ENCODE measurements at regions of chr17 and their contacts with region 1.

Region 1: DNA sequence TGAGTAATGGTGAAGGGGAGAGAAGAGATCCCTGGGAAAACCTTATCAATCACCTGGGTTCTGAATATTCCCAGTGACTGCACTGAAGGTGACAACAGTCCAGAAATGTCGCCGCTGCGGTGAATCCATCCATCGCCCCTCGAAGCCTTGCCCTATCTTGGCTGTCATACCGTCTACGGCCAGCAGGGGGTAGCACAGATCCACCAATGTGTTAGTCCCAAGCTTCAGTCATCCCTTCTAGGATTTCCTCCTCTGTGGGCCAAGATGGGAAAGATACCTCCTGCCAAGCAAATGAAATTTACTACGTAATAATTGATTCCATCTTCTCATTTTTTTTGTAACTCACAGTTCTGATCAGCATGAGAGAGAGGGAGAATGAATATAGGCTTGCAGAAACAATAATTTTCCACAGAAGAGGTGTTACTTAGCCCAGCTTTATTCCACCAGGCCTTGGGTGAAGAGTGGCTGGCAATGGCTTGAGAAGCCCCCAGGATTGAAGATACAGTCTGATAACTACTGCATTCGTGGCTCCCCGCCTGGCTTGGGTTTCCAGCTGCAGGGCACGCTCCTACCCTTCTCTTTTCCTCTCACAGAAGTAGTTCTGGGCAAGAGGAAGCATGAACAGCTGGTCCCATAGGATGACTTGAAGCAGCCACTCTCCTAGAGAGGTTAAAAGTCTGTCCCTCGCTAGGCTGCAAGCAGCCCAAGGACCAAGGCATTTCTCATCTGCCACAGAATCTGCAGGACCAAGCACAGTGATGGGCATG is 2.6 kb upstream of the FMNL1 start:
- DNase-seq: peak; percentile 86
- H3K4me3 ChIP-seq: peak overlapping the region in 1 of 2 experiments; percentile 28; a peak in 1 of 4 replicates
- H3K27ac ChIP-seq: no peak overlapping the region
- H3K4me1 ChIP-seq: peaks cover 0 to 24% of the 10 kb centered on the region in 2 experiments; a peak in 1 of 4 replicates
- H3K27me3 ChIP-seq: no peaks in the 10 kb centered on the region
- CTCF ChIP-seq: peak; percentile 93
- EP300 ChIP-seq: no peak; a peak in 1 of 4 replicates
- RAD21 ChIP-seq: peak; percentile 100

Region 2: DNA sequence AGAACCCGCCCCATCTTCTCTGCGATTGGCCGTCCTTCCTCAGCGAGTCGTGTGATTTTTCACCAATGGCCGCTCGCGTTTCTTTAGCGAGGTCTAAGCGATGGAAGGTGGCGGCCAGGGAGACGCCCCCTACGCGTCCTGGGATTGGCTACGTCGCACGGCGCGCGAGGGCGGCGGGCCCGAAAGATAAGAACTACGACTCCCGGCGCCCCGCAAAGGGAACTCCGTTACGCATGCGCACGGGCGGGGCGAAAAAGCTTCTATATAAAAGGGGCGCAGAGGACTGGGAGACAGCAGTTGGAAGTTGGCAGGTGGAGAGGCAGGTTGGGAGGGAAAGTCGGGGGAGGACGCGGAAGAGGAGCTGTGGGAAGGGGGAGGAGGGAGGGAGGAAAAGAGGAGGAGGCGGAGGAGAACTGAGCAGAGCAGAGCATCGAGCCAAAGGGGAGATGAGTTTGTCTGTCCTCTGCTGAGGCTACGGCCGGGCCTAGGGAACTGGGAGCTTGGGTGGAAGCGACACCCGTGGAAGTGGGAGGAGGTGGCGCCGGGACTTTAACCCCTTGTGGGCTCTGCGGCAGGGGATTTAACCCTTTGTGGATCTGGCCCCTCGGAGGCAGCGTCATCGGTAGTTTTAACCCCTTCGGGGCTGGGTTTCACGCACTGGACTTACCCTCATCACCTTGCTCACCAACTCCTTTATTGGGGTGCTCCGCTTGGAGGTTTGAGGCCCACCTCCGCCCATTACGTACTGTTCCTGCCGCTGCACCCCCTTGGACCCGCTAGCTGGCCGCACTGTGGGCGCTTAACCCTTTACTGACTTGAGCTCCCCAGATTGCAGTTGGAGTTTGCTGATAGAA is 70.7 kb before region 1 on chr17 and contains the start of gene HEXIM1:
- CTCF ChIA-PET with region 1: interaction called, 11 read pairs
- POLR2A ChIA-PET with region 1: interaction called, 9 read pairs
- DNase-seq: peak; percentile 94
- H3K4me3 ChIP-seq: peak within 1 kb of the TSS; percentile 85 to 99
- H3K27ac ChIP-seq: peak within 1 kb of the TSS; percentile 99 to 100
- H3K4me1 ChIP-seq: peaks cover 17 to 25% of the 10 kb centered on the region in 2 experiments; a peak in 3 of 4 replicates
- H3K27me3 ChIP-seq: no peaks in the 10 kb centered on the region
- CTCF ChIP-seq: no peak
- EP300 ChIP-seq: no peak; a peak in 1 of 4 replicates
- RAD21 ChIP-seq: no peak
- polyA plus RNA-seq, gene HEXIM1: 16.1 and 20.7 TPM in 2 replicates

Region 3: DNA sequence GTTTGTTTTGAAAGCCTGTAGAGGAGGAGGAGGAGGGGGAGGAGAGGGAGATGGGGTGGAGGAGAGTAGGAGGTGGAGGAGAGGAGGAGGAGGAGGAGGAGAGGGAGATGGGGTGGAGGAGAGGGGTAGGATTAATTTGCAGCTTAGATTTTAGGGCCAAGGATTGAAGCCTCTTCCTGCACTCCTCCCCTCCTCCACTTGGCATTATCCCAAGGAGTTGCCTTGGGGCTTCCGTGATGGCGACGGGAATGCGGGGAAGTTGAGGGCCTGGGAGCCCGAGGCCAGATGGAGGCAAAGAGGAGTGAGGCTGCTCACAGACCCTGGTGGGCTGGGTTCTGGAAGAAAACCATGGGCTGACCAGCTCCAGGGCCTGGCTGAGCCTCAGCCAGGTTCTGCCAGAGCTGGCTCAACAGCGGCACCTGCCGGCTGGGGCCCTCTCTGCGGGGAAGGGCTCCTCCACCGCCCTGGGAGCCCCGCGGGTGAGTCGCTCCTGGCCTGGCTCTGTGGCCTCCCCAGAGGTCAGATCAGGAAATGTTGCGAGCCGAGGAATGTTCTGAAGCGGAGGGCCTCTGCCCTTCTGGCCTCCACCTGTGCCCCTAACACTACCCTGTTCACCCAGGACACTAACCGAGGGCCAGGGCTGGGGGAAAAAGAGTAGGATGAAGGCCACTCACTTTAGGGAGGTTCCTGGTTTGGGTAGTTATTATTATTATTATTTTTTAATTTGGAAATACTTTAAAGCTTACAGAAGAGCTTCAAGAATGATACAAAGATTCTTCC is 21.3 kb before region 1 on chr17:
- CTCF ChIA-PET with region 1: interaction called, 12 read pairs
- POLR2A ChIA-PET with region 1: no interaction called
- DNase-seq: peak; percentile 93
- H3K4me3 ChIP-seq: peak overlapping the region in 1 of 2 experiments; percentile 54; a peak in 1 of 4 replicates
- H3K27ac ChIP-seq: peak overlapping the region; percentile 41 to 46; a peak in 3 of 4 replicates
- H3K4me1 ChIP-seq: peaks cover 5 to 8% of the 10 kb centered on the region in 2 experiments; a peak in 3 of 4 replicates
- H3K27me3 ChIP-seq: no peaks in the 10 kb centered on the region
- CTCF ChIP-seq: peak; percentile 98
- EP300 ChIP-seq: no peak
- RAD21 ChIP-seq: peak; percentile 95

Region 4: GRCh38 chr17:45247429-45248131 is 28.5 kb after region 1 on chr17:
- CTCF ChIA-PET with region 1: interaction called, 232 read pairs
- POLR2A ChIA-PET with region 1: no interaction called
- DNase-seq: peak; percentile 95
- H3K4me3 ChIP-seq: peak overlapping the region; percentile 65 to 80
- H3K27ac ChIP-seq: peak overlapping the region; percentile 44 to 86; a peak in 3 of 4 replicates
- H3K4me1 ChIP-seq: peaks cover 0 to 20% of the 10 kb centered on the region in 2 experiments; a peak in 1 of 4 replicates
- H3K27me3 ChIP-seq: no peaks in the 10 kb centered on the region
- CTCF ChIP-seq: no peak
- EP300 ChIP-seq: no peak
- RAD21 ChIP-seq: no peak

Region 5: GRCh38 chr17:45270828-45271418 is 51.8 kb after region 1 on chr17:
- CTCF ChIA-PET with region 1: interaction called, 15 read pairs
- POLR2A ChIA-PET with region 1: no interaction called
- DNase-seq: peak; percentile 68
- H3K4me3 ChIP-seq: no peak overlapping the region
- H3K27ac ChIP-seq: no peak overlapping the region
- H3K4me1 ChIP-seq: peaks cover 0 to 6% of the 10 kb centered on the region in 2 experiments; a peak in 2 of 4 replicates
- H3K27me3 ChIP-seq: no peaks in the 10 kb centered on the region
- CTCF ChIP-seq: peak; percentile 62
- EP300 ChIP-seq: no peak
- RAD21 ChIP-seq: peak; percentile 34

Region 6: GRCh38 chr17:45307290-45308015 is 88.4 kb after region 1 on chr17:
- CTCF ChIA-PET with region 1: interaction called, 21 read pairs
- POLR2A ChIA-PET with region 1: no interaction called
- DNase-seq: no peak
- H3K4me3 ChIP-seq: no peak overlapping the region
- H3K27ac ChIP-seq: peak overlapping the region; percentile 48 to 98; a peak in 3 of 4 replicates
- H3K4me1 ChIP-seq: peaks cover 27 to 48% of the 10 kb centered on the region in 2 experiments
- H3K27me3 ChIP-seq: no peaks in the 10 kb centered on the region
- CTCF ChIP-seq: no peak
- EP300 ChIP-seq: peak in 1 of 2 experiments; percentile 68; a peak in 2 of 4 replicates
- RAD21 ChIP-seq: no peak

Region 7: GRCh38 chr17:45428050-45428617 is 209.1 kb after region 1 on chr17:
- CTCF ChIA-PET with region 1: interaction called, 21 read pairs
- POLR2A ChIA-PET with region 1: no interaction called
- DNase-seq: peak; percentile 94
- H3K4me3 ChIP-seq: no peak overlapping the region; a peak in 1 of 4 replicates
- H3K27ac ChIP-seq: no peak overlapping the region
- H3K4me1 ChIP-seq: peaks cover 0 to 16% of the 10 kb centered on the region in 2 experiments; a peak in 1 of 4 replicates
- H3K27me3 ChIP-seq: no peaks in the 10 kb centered on the region
- CTCF ChIP-seq: peak; percentile 88
- EP300 ChIP-seq: no peak
- RAD21 ChIP-seq: peak; percentile 84

Measured in SK-N-SH (cell line).